ENCODE measurements at regions of chr10 and their contacts with region 1.

Region 1: GRCh38 chr10:110857265-110858158 is 14.2 kb upstream of the PDCD4 start:
- DNase-seq: no peak

Region 2: DNA sequence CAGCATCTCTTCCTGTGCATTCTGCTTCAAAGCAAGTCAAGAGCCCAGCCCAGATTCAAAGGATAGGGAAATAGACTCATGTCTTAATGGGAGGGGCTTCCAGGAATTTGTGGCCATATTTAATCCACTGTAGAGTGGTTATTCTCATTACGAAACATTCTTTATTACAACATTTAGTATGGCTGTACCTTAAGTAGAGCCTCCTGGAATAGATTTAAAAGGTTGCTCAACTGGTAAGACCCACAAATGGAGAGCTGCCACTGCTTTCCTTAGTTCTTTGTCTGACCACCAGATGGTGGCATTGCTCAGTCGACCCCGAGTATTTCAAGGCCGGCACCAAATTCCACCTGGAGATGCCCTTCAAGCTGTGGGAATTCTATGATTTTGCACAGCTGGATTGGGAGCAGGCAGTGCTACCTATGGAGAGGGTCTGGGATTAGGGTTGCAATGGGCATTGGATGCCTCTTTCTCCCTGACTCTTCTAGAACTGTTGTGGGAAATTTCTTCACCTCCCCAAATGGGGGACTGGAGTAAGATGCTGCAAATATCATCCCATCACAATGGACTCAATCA is 111.2 kb before region 1 on chr10:
- CTCF ChIA-PET with region 1: no interaction called
- POLR2A ChIA-PET with region 1: no interaction called
- DNase-seq: peak; percentile 81

Region 3: GRCh38 chr10:110834629-110835301 is 22.7 kb before region 1 on chr10:
- CTCF ChIA-PET with region 1: no interaction called
- POLR2A ChIA-PET with region 1: no interaction called
- DNase-seq: peak; percentile 42

Region 4: GRCh38 chr10:110871298-110872084 is 14.0 kb after region 1 on chr10 and contains the start of gene PDCD4:
- CTCF ChIA-PET with region 1: interaction called, 7 read pairs
- POLR2A ChIA-PET with region 1: interaction called, 11 read pairs
- DNase-seq: peak; percentile 99

Region 5: DNA sequence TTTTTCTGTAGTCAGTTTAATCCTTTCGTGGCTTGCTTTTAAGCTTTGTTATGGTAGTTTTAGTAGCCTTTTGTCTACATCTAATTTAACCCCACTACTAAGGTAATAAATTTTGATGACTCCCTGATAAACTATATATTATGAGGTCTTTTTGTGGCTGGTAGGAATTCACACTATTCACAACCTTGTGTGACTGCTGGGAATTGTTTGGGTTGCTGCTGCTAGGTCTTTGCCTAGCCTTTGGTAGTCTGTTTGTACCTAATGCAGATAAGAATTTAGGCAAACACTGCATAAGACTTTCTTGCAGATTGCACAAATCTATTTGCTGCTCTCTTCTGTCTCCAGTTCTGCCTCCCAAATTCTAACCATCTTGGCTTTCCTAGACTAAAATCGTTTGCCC is 120.2 kb after region 1 on chr10:
- CTCF ChIA-PET with region 1: no interaction called
- POLR2A ChIA-PET with region 1: no interaction called
- DNase-seq: no peak

Measured in HEK293T (cell line).